Esophagus muscularis mucosa (tissue), 4 donors: ENCODE measurements at regions of chr17 and their contacts with region 1.

Region 1: DNA sequence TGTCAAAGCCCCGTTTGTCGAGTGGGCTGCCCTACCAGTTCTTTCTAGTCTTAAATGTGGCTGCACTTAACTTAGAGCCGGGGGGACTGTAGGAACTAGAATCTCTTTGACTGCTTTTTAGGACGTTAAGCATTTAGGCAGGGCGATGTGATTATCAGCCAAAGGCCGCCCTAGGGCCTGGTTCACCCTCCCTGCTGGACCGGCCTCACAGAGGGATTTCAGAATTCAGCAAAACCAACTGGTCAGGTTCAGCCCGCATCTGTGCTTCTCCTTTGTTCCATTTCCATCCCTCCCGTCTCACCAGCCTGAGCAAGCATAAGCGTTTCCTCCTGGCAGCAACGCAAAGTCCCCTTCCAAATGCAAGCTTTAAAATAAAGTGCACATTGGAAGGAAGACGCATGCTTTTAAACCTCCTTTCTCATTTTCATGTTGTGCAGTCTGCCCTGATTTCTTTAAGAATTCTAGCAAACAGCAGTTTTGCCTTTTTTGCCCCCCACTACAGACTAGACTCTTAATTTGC is 16.5 kb upstream of the NAT9 start:
- DNase-seq: no peak
- H3K4me3 ChIP-seq: no peak overlapping the region
- H3K27ac ChIP-seq: no peak overlapping the region
- H3K4me1 ChIP-seq: peaks cover 0 to 7% (median 5%) of the 10 kb centered on the region in 4 donors
- H3K27me3 ChIP-seq: no peaks in the 10 kb centered on the region
- CTCF ChIP-seq: no peak
- EP300 ChIP-seq: no peak
- POLR2A ChIP-seq: no peak

Region 2: GRCh38 chr17:74864866-74865395 is 72.3 kb after region 1 on chr17:
- intact Hi-C with region 1: loop called (anchors 2 kb)
- DNase-seq: peak; percentile 96
- H3K4me3 ChIP-seq: no peak overlapping the region
- H3K27ac ChIP-seq: no peak overlapping the region
- H3K4me1 ChIP-seq: peaks cover 21 to 32% (median 26%) of the 10 kb centered on the region in 4 donors
- H3K27me3 ChIP-seq: peaks cover 0 to 38% (median 15%) of the 10 kb centered on the region in 4 donors
- CTCF ChIP-seq: peak; percentile 90 to 97 (median 96)
- EP300 ChIP-seq: no peak
- POLR2A ChIP-seq: no peak